ENCODE measurements at regions of chr7 and their contacts with region 1.

Region 1: DNA sequence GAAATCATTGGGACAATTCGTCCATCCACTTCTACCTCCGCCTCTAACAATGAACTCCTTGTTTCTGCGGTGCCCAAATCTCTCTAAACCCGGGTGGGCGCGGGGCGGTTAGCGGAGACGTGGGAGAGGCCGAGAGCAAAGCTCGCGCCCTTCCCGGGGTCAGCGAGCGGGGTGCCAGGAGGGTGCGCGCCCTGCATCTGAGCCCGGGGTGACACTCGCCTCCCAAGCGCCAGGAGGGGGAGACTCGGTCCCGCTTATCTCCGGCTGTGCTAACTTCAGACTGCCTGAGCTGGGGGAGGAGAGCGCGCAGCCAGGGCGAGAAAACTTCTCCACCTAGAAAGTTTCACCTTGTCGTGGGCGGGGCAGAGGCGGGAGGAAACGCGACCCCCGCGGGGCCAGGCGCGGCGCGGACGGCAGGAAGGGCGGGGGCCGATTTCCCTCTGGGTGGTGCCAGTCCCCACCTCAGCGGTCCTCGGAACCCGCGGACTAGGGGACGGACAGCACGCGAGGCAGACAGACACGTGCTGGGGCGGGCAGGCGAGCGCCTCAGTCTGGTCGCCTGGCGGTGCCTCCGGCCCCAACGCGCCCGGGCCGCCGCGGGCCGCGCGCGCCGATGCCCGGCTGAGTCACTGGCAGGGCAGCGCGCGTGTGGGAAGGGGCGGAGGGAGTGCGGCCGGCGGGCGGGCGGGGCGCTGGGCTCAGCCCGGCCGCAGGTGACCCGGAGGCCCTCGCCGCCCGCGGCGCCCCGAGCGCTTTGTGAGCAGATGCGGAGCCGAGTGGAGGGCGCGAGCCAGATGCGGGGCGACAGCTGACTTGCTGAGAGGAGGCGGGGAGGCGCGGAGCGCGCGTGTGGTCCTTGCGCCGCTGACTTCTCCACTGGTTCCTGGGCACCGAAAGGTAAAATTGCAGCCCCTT is at the start of gene MET:
- DNase-seq: no peak
- H3K4me3 ChIP-seq: peak within 1 kb of the TSS; percentile 89
- CTCF ChIP-seq: peak; percentile 83

Region 2: DNA sequence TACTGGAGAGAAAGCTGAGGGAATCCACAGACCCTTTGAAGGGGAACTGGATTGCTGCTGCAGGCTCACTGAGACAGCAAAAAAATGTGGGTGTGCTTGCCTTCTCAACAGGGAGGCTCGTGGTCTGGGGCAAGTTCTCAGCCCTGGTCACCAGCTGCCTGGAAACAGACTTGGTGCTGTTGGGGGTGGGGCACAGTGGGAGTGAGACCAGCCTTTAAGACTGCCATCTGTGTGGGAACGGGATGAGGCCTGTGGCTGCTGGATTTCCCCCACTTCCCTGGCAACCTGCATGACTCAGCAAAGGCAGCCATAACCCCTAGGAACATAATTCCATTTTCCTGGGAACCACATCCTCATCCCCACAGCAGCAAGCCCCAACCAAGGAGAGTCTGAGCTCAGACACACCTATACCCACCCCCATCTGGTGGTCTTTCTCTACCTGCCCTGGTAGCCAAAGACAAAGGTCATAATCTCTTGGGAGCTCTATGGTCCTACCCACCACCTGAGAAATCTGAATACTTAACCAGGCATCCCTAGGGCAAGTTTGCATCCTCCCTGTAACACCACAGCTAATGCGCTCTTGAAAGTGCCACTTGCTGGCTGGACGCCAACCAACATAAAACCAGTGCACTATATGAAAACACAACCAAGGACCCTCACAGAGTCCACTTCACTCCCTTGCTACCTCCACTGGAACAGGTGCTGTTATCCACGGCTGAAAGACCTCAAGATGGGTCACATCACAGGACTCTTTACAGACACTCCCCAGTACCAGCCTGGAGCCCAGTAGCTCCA is 596.4 kb before region 1 on chr7:
- CTCF ChIA-PET with region 1: no interaction called
- POLR2A ChIA-PET with region 1: no interaction called
- DNase-seq: no peak
- H3K4me3 ChIP-seq: no peak overlapping the region
- CTCF ChIP-seq: no peak

Region 3: GRCh38 chr7:116417593-116418341 is 254.2 kb before region 1 on chr7:
- CTCF ChIA-PET with region 1: no interaction called
- POLR2A ChIA-PET with region 1: no interaction called
- DNase-seq: no peak
- H3K4me3 ChIP-seq: no peak overlapping the region
- CTCF ChIP-seq: no peak

Region 4: DNA sequence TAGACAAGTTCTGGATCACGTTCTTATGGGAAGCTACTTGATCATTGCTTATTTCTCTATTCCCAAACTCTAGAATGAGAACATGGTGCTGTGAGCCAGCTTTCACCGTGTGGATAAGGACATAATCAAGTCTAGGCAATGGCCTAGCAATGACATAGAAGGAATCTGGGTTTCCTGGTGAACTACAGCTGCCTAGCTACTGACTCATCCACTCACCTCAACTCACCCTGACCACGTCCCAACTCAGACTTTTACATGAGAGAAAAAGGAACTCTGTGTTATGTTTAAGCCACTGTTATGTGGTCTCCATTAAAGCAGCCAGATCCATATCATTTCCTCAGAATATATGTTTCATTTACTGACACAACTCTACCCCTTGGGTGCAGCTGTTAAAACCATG is 18.7 kb before region 1 on chr7:
- CTCF ChIA-PET with region 1: interaction called, 20 read pairs
- POLR2A ChIA-PET with region 1: no interaction called
- DNase-seq: no peak
- H3K4me3 ChIP-seq: no peak overlapping the region
- CTCF ChIP-seq: no peak

Region 5: GRCh38 chr7:116726713-116727431 is 54.9 kb after region 1 on chr7:
- CTCF ChIA-PET with region 1: no interaction called
- POLR2A ChIA-PET with region 1: no interaction called
- DNase-seq: no peak
- H3K4me3 ChIP-seq: no peak overlapping the region
- CTCF ChIP-seq: no peak

Region 6: GRCh38 chr7:116809636-116810266 is 137.8 kb after region 1 on chr7:
- CTCF ChIA-PET with region 1: interaction called, 142 read pairs
- POLR2A ChIA-PET with region 1: no interaction called
- DNase-seq: no peak
- H3K4me3 ChIP-seq: no peak overlapping the region
- CTCF ChIP-seq: peak; percentile 36

Region 7: DNA sequence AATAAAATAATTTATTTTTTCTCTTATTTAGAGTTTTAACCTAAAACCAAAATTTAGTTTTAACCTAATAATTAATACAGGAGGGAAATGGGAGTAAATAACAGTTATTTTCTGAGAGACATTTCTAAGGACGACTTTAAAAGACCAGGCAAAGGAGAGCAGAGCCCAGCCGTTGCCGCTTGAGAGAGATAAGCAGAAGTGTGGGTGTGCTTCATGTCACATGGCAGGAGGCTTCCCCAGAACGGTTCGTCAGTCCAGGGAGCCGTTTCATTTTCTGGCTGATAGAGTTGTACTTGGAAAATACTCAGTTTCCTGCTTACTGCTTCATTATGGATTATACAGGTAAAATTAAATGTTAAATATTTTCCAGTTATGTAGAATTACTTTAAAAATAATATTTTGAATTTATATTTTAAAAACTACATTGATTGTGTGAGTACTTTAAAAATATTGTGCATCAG is 342.8 kb after region 1 on chr7:
- CTCF ChIA-PET with region 1: no interaction called
- POLR2A ChIA-PET with region 1: no interaction called
- DNase-seq: no peak
- H3K4me3 ChIP-seq: no peak overlapping the region
- CTCF ChIP-seq: no peak

Measured in AG04449 (cell line).